Naive thymus-derived CD4-positive, alpha-beta T cell (primary cell): ENCODE measurements at regions of chr6 and their contacts with region 1.

Region 1: GRCh38 chr6:142171351-142171750 is 24.3 kb downstream of the VTA1 start:
- DNase-seq: no peak
- ATAC-seq: no peak
- H3K4me3 ChIP-seq: no peak overlapping the region
- H3K4me3 Mint-ChIP-seq: no peak overlapping the region
- H3K27ac ChIP-seq: no peak overlapping the region
- H3K27ac Mint-ChIP-seq: no peak overlapping the region
- H3K4me1 ChIP-seq: no peaks in the 10 kb centered on the region
- H3K4me1 Mint-ChIP-seq: peaks cover 0 to 9% (median 4%) of the 10 kb centered on the region in 7 donors
- H3K27me3 ChIP-seq: no peaks in the 10 kb centered on the region
- H3K27me3 Mint-ChIP-seq: no peaks in the 10 kb centered on the region

Region 2: GRCh38 chr6:142155895-142156757 is 15.2 kb before region 1 on chr6:
- CTCF ChIA-PET with region 1: interaction called, 7 read pairs
- POLR2A ChIA-PET with region 1: no interaction called
- intact Hi-C with region 1: loop called in 1 of 2 experiments (anchors 2 kb)
- DNase-seq: peak in 6 of 9 donors; percentile 8 to 51 (median 39)
- ATAC-seq: peak; percentile 80
- H3K4me3 ChIP-seq: no peak overlapping the region
- H3K4me3 Mint-ChIP-seq: peak overlapping the region in 9 of 10 donors; percentile 1 to 59 (median 20)
- H3K27ac ChIP-seq: peak overlapping the region; percentile 18
- H3K27ac Mint-ChIP-seq: peak overlapping the region; percentile 19 to 89 (median 46)
- H3K4me1 ChIP-seq: peaks cover 0 to 6% of the 10 kb centered on the region in 2 donors
- H3K4me1 Mint-ChIP-seq: peaks cover 26 to 79% (median 64%) of the 10 kb centered on the region in 7 donors
- H3K27me3 ChIP-seq: no peaks in the 10 kb centered on the region
- H3K27me3 Mint-ChIP-seq: no peaks in the 10 kb centered on the region

Region 3: GRCh38 chr6:142378138-142378875 is 207.0 kb after region 1 on chr6:
- CTCF ChIA-PET with region 1: no interaction called
- POLR2A ChIA-PET with region 1: no interaction called
- intact Hi-C with region 1: no loop called
- DNase-seq: no peak
- ATAC-seq: peak; percentile 44
- H3K4me3 ChIP-seq: no peak overlapping the region
- H3K4me3 Mint-ChIP-seq: no peak overlapping the region
- H3K27ac ChIP-seq: no peak overlapping the region
- H3K27ac Mint-ChIP-seq: peak overlapping the region in 1 of 9 donors; percentile 27
- H3K4me1 ChIP-seq: no peaks in the 10 kb centered on the region
- H3K4me1 Mint-ChIP-seq: peaks cover 0 to 12% (median 3%) of the 10 kb centered on the region in 7 donors
- H3K27me3 ChIP-seq: no peaks in the 10 kb centered on the region
- H3K27me3 Mint-ChIP-seq: peaks cover 0 to 37% (median 0%) of the 10 kb centered on the region in 5 donors